Right ventricle myocardium inferior (tissue), 1 donor: ENCODE measurements at regions of chr11 and their contacts with region 1.

Region 1: DNA sequence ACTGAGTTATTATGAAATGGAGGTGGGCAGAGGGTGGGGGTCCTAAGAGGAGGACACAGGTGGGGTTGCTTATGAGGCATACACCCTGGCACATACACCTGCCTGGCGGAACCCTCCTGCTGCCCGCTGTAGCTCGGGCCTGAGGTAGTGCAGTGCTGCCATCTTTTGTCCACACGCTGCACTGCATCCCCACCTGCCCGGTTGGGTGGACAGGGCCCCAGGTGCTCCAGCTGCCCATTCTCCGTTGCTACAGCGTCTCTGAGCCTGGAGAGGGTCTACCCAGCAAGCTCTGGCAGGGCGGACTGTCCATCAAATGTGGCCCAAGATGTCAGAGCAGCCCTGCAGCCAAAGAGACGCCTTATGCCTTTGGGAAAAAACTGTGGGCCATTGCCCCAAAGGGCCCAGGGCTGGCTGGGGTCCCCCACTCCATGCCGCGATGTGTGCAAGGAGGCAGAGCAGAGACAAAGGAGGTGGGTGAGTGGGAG is 131.2 kb downstream of the BUD13 start:
- DNase-seq: no peak
- ATAC-seq: peak; percentile 46

Region 2: DNA sequence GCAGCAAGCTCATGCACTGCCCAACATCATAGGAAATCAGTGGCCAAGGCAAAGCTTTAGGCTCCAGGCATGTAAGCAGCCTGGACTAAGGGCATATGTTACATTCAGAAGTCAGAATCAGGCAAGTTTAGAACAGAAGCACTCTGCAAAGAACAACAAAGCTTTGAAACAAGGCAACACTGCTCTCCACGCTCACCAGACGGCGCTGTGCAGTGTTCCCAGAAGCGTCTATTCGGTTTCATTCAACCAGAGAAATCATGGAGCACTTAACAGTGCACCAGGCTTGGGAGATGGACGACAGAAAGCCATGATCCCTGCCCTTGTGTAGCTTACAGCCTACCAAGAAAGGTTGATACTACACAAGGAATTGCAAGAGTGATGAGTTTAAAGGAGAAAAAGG is 424.6 kb before region 1 on chr11:
- intact Hi-C with region 1: loop called (anchors 10 kb)
- DNase-seq: no peak
- ATAC-seq: no peak

Region 3: DNA sequence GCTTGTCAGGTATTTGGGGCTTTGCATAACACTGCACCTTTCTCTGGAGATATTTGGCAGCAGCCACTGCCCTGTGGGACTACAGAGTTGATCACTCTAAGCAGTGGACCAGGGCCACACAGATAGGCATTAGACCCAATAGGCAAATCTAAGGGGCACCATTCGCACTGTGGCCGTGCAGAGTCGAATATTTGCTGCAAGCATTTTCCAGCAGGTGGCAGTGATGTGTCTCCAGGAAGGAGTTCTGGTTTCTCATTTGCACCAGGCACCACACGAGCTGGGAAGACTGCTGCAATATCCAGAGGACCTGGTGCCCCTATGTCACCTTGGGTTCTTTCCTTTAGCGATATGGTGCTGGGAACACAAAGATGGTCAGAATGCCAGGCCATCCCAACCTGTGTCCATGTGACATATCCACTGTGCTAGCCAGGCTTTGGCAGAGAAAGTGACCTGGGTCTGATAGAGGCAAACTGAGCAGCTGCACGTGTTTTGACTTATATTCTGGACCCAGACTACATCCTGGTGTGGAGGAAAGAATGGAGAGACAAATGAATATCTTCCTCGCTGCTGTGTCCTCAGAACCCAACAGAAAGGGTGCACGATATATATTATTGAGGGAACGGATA is 187.5 kb before region 1 on chr11:
- intact Hi-C with region 1: loop called (anchors 1 kb)
- DNase-seq: no peak
- ATAC-seq: peak; percentile 42